ENCODE measurements at regions of chr11 and their contacts with region 1.

Region 1: DNA sequence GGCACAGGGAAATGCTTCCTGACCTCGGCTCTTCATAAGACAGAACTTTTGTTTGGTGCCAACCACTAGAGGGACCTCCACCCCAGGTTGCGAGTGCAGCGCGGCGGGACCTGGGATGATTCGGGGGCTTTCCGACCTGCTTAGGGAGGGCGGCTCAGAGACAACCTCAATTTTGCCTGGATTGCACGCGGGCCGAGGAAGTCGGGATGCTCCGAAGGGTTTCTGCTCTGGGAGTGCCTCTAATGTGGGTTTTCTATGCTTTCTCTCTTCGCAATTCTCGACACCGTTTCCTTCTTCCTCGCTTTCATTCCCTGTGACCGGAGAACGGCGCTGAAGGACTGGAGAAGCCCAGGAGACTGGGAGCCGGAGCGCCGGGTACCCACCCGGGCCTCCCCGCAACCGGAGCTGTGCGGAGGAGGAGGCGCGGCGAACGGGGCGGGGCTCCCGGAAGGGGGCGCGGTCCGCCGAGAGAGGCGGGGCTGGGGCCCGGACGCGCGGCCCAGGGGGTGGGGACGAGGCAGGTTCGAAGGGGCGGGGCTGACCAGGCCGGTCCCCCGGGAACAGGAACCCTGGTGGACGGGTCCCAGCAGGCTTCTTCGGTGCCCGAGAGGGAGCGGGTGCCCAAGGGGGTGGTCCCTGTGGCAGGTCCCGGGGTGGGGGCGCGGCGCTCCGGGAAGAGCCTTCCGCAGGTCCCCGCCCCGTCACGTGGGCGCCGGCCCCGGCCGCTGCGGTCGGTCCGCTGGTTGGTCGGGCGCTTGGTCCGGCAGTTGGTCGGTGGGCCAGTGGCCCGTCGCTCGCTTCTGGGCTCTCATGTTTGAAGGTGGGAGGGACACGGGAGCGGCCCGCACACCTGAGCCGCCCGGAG is at the start of gene PPFIBP2:
- DNase-seq: peak; percentile 96
- H3K4me3 ChIP-seq: peak within 1 kb of the TSS; percentile 63 to 76
- H3K27ac ChIP-seq: peak within 1 kb of the TSS in 1 of 2 experiments; percentile 60; a peak in 1 of 4 replicates
- H3K4me1 ChIP-seq: peaks cover 0 to 18% of the 10 kb centered on the region in 2 experiments; a peak in 1 of 4 replicates
- H3K27me3 ChIP-seq: peaks cover 9% of the 10 kb centered on the region
- CTCF ChIP-seq: peak; percentile 79
- EP300 ChIP-seq: no peak
- RAD21 ChIP-seq: peak; percentile 69
- polyA plus RNA-seq, gene PPFIBP2: 0.67 and 1.1 TPM in 2 replicates

Region 2: DNA sequence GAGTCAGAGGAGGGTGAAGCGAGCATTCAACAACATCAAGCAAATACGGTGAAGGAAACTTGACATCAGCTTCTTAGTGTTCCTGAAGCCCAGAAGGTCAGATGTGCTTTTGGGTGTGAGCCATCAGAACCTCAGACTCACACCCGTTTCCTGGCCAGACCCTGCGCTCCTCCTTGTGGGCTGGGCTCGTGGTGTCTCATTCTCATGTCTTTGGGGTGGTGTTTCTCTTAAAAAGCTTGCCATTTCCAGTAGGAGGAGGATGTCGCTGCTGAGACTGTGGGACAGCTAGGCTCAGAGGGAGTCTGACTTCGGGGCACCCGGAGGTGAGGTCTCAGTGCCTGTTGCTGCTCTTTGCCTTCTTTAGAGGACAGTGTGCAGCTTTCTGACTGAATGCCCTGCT is 24.6 kb after region 1 on chr11:
- CTCF ChIA-PET with region 1: interaction called, 10 read pairs
- POLR2A ChIA-PET with region 1: no interaction called
- DNase-seq: no peak
- H3K4me3 ChIP-seq: no peak overlapping the region
- H3K27ac ChIP-seq: no peak overlapping the region
- H3K4me1 ChIP-seq: peaks cover 0 to 21% of the 10 kb centered on the region in 2 experiments; a peak in 2 of 4 replicates
- H3K27me3 ChIP-seq: no peaks in the 10 kb centered on the region; the same call in 1 of the 2 replicates
- CTCF ChIP-seq: no peak
- EP300 ChIP-seq: no peak
- RAD21 ChIP-seq: no peak

Region 3: GRCh38 chr11:7577291-7578190 is 64.1 kb after region 1 on chr11:
- CTCF ChIA-PET with region 1: interaction called, 42 read pairs
- POLR2A ChIA-PET with region 1: no interaction called
- DNase-seq: peak; percentile 51
- H3K4me3 ChIP-seq: peak overlapping the region; percentile 37 to 44
- H3K27ac ChIP-seq: peak overlapping the region; percentile 0 to 82
- H3K4me1 ChIP-seq: peaks cover 12 to 55% of the 10 kb centered on the region in 2 experiments; a peak in 1 of 4 replicates
- H3K27me3 ChIP-seq: no peaks in the 10 kb centered on the region
- CTCF ChIP-seq: no peak
- EP300 ChIP-seq: no peak
- RAD21 ChIP-seq: no peak

Region 4: GRCh38 chr11:7657306-7658025 is 144.0 kb after region 1 on chr11:
- CTCF ChIA-PET with region 1: interaction called, 55 read pairs
- POLR2A ChIA-PET with region 1: no interaction called
- DNase-seq: peak; percentile 68
- H3K4me3 ChIP-seq: no peak overlapping the region
- H3K27ac ChIP-seq: no peak overlapping the region
- H3K4me1 ChIP-seq: peaks cover 0 to 40% of the 10 kb centered on the region in 2 experiments; a peak in 1 of 4 replicates
- H3K27me3 ChIP-seq: no peaks in the 10 kb centered on the region
- CTCF ChIP-seq: peak; percentile 56
- EP300 ChIP-seq: no peak
- RAD21 ChIP-seq: peak; percentile 86

Measured in SK-N-SH (cell line).